Heart left ventricle (tissue), 16 donors: ENCODE measurements at regions of chr10 and their contacts with region 1.

Region 1: DNA sequence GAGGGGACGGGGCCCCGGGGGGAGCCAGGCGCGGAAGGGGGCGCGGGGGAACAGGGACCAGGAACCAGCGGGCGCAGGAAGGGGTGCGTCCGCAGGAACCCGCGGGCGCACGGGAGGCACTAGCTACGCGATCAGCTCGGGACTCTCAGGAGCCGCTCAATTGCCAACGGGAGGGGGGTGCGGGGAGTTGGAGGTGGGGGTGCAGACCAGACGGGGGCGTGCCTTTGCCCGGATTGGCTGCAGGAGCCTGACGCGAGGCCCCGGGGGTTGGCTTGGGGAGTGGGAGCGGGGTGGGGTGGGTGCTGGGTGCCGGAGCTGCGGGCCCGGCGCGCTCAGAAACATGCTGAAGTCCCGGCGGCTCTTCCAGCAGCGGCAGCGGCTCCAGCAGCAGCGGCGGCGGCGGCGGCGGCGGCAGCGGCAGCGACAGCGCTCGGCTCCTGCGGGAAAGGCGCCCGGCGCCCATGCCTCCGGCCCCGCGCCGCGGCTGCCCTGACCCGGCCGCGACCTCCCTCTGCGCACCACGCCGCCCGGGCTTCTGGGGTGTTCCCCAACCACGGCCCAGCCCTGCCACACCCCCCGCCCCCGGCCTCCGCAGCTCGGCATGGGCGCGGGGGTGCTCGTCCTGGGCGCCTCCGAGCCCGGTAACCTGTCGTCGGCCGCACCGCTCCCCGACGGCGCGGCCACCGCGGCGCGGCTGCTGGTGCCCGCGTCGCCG is at the start of gene ADRB1:
- DNase-seq: peak; percentile 92 to 97 (median 95)
- ATAC-seq: peak; percentile 90 to 93 (median 92)
- H3K4me3 ChIP-seq: peak within 1 kb of the TSS; percentile 42 to 80 (median 64)
- H3K27ac ChIP-seq: peak within 1 kb of the TSS; percentile 72 to 93 (median 90)
- H3K4me1 ChIP-seq: peaks cover 0 to 25% (median 2%) of the 10 kb centered on the region in 12 donors
- H3K27me3 ChIP-seq: peaks cover 0 to 63% (median 0%) of the 10 kb centered on the region in 9 donors
- CTCF ChIP-seq: no peak
- POLR2A ChIP-seq: peak; percentile 53 to 89
- total RNA-seq, gene ADRB1: 28.3 to 115 (median 59.4) TPM

Region 2: GRCh38 chr10:113854011-113854760 is 189.5 kb before region 1 on chr10 and contains the starts of genes DCLRE1A and NHLRC2:
- intact Hi-C with region 1: loop called in 6 of 10 experiments (anchors 5 to 10 kb)
- DNase-seq: peak; percentile 81 to 90 (median 86)
- ATAC-seq: peak; percentile 72 to 88 (median 86)
- H3K4me3 ChIP-seq: peak within 1 kb of the TSS; percentile 63 to 97 (median 88)
- H3K27ac ChIP-seq: peak within 1 kb of the TSS; percentile 79 to 98 (median 95)
- H3K4me1 ChIP-seq: peaks cover 0 to 59% (median 42%) of the 10 kb centered on the region in 12 donors
- H3K27me3 ChIP-seq: no peaks in the 10 kb centered on the region
- CTCF ChIP-seq: no peak
- POLR2A ChIP-seq: peak in 1 of 2 donors; percentile 33
- total RNA-seq, gene DCLRE1A: 5.1 to 8.5 (median 6.3) TPM
- total RNA-seq, gene NHLRC2: 50.2 to 105 (median 78.3) TPM

Region 3: DNA sequence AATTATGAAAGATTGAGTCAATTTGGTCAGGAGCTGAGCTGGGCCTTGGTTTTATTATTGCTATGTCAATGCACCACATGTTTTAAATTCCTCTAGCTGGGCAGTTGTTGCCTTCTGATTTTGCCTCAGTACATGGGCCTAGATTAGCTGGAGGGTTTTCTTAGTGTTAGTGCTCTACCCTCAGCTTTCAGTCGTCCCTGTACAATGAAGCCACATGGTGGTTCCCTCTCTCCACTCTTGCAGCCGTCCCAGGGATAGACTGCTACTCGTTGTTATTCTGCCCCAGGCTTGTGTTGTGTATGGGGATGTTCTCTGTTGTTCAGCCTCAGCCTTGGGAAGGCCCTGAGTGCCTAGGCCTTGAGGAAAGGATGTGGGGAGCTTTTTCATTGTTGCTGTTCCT is 152.2 kb before region 1 on chr10:
- intact Hi-C with region 1: loop called in 4 of 10 experiments (anchors 10 kb)
- DNase-seq: peak in 1 of 5 donors; percentile 13
- ATAC-seq: peak; percentile 82 to 94 (median 87)
- H3K4me3 ChIP-seq: no peak overlapping the region
- H3K27ac ChIP-seq: peak overlapping the region in 9 of 12 donors; percentile 12 to 70 (median 32)
- H3K4me1 ChIP-seq: peaks cover 0 to 52% (median 9%) of the 10 kb centered on the region in 12 donors
- H3K27me3 ChIP-seq: no peaks in the 10 kb centered on the region
- CTCF ChIP-seq: peak in 5 of 12 donors; percentile 16 to 31 (median 21)
- POLR2A ChIP-seq: no peak

Region 4: GRCh38 chr10:113899952-113900598 is 143.6 kb before region 1 on chr10:
- intact Hi-C with region 1: loop called in 6 of 10 experiments (anchors 5 to 10 kb)
- DNase-seq: no peak
- ATAC-seq: peak; percentile 82 to 93 (median 88)
- H3K4me3 ChIP-seq: no peak overlapping the region
- H3K27ac ChIP-seq: peak overlapping the region in 10 of 12 donors; percentile 10 to 58 (median 34)
- H3K4me1 ChIP-seq: peaks cover 0 to 25% (median 1%) of the 10 kb centered on the region in 12 donors
- H3K27me3 ChIP-seq: no peaks in the 10 kb centered on the region
- CTCF ChIP-seq: no peak
- POLR2A ChIP-seq: no peak

Region 5: GRCh38 chr10:113922787-113923570 is 120.7 kb before region 1 on chr10:
- intact Hi-C with region 1: loop called in 5 of 10 experiments (anchors 5 to 10 kb)
- DNase-seq: peak in 2 of 5 donors; percentile 28 to 40
- ATAC-seq: peak in 3 of 4 donors; percentile 57 to 62 (median 57)
- H3K4me3 ChIP-seq: no peak overlapping the region
- H3K27ac ChIP-seq: no peak overlapping the region
- H3K4me1 ChIP-seq: peaks cover 0 to 12% (median 0%) of the 10 kb centered on the region in 12 donors
- H3K27me3 ChIP-seq: no peaks in the 10 kb centered on the region
- CTCF ChIP-seq: peak in 2 of 12 donors; percentile 32 to 37
- POLR2A ChIP-seq: no peak

Region 6: GRCh38 chr10:114068054-114068707 is 24.5 kb after region 1 on chr10:
- intact Hi-C with region 1: loop called in 2 of 10 experiments (anchors 2 kb)
- DNase-seq: peak in 1 of 5 donors; percentile 39
- ATAC-seq: no peak
- H3K4me3 ChIP-seq: no peak overlapping the region
- H3K27ac ChIP-seq: peak overlapping the region in 11 of 12 donors; percentile 28 to 87 (median 78)
- H3K4me1 ChIP-seq: peaks cover 0 to 49% (median 29%) of the 10 kb centered on the region in 12 donors
- H3K27me3 ChIP-seq: no peaks in the 10 kb centered on the region
- CTCF ChIP-seq: no peak
- POLR2A ChIP-seq: no peak

Region 7: DNA sequence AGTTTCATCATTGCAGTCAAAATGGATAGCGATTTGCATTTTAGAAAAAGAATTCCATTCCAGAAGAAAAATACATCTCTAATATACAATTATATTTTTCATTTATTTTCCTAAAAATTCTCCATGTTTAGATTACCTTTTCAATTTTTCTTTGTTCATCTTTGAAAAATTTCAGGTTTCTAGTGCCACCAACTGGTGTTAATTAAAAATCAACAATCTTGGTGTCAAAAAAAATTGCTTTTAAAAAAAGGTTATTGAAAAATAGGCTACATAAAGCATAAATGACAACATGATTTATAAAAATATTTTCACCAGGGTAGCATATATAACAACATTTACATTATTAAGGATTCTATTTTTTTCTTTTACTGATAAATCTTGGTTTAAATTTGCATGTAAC is 77.3 kb after region 1 on chr10:
- intact Hi-C with region 1: no loop called
- DNase-seq: no peak
- ATAC-seq: no peak
- H3K4me3 ChIP-seq: no peak overlapping the region
- H3K27ac ChIP-seq: no peak overlapping the region
- H3K4me1 ChIP-seq: peaks cover 0 to 5% (median 0%) of the 10 kb centered on the region in 12 donors
- H3K27me3 ChIP-seq: no peaks in the 10 kb centered on the region
- CTCF ChIP-seq: no peak
- POLR2A ChIP-seq: no peak